ENCODE measurements at regions of chr21 and their contacts with region 1.

Region 1: DNA sequence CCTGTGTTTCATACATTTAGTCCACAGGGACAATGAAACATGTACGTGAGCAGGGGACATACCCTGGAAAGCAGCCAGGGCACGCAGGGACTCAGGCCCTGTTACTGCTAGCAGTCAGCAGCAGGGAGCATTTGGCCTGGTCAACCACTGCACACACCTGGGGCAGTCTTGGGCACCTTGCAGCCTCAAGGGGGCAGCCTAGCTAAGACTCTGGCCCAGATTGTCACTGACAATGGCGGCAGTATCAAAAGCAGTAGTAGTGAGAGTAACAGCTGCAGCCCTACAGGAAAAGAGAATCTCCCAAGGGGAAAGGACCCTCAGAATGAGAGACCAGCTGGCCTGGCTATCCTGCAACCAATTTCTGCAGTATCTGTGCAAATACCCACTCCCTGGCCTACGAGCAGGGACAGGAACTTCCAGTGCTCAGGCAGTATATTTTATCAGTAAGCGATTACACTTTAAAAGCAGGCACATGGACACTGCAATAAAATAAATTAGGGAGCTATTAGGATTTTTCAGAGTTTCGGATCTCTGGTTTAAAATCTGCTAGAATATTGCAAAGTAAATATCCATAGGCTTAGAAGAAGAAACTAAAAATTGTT is 475.6 kb downstream of the LTN1 start:
- DNase-seq: peak; percentile 77 to 83 (median 81)
- ATAC-seq: peak; percentile 98
- H3K4me3 ChIP-seq: no peak overlapping the region
- H3K27ac ChIP-seq: no peak overlapping the region
- H3K4me1 ChIP-seq: no peaks in the 10 kb centered on the region
- H3K27me3 ChIP-seq: no peaks in the 10 kb centered on the region
- CTCF ChIP-seq: peak; percentile 52 to 70 (median 66)
- POLR2A ChIP-seq: no peak

Region 2: DNA sequence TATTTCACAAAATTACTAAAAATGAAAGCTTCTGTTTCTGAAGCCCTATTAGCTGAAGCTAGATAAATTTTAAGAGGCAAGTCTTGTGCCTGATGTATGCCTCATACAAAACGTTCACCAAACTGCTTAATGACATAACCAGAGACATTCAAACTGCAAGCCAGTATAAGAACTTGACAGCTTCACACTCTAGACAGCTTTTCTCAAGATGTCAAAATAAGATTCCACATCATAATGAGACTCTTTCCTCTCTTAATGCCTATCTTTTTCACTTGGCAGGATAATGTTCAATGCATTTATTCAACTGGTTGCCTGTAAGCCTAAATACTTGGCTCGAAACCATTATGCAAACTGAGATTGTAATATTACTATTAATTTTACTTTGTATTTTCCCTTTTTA is 51.6 kb after region 1 on chr21:
- intact Hi-C with region 1: no loop called
- DNase-seq: no peak
- ATAC-seq: no peak
- H3K4me3 ChIP-seq: no peak overlapping the region
- H3K27ac ChIP-seq: no peak overlapping the region
- H3K4me1 ChIP-seq: no peaks in the 10 kb centered on the region
- H3K27me3 ChIP-seq: no peaks in the 10 kb centered on the region
- CTCF ChIP-seq: no peak
- POLR2A ChIP-seq: no peak

Region 3: DNA sequence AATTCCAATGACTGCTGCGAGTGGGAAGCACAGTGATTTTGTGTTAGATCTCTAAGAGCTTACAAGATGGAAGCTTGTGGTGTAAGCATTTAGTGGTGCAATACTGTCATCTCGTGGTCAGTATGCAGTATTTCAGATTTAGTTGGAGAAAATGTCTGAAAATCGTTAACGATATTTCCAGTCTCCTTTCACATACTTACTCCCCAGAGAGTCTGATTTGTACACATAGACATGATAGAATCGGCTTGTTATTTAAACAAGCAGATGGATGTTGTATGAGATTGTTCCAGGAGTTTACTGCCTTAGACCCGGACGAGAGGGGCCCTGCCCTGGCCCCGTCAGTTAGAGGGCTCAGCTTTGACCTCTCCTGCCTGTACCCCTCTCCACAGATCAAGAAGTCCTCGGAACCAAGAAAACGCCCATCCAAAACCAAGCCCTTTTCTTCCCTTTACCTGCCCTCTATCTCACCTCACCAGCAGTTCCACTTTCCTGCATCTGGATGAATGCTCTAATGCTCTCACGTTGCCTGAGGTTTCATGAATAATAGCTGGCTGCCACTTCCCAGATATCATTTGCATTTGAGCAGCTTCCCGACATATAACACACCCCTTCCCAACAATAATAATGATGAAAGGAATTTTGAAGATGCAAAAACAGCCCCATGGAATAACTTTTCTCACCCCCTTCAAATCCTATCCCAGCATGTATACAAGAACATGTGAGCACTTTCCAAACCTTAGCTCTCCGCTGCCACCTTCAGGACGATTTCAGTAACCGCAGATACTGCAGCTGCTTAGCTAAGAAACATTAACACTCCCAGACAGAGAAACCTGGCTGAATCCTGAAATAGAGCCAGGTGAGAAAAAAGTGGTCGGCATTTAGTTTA is 228.3 kb after region 1 on chr21:
- intact Hi-C with region 1: loop called (anchors 10 kb)
- DNase-seq: peak; percentile 77 to 80 (median 78)
- ATAC-seq: peak; percentile 95
- H3K4me3 ChIP-seq: peak overlapping the region in 1 of 2 donors; percentile 7
- H3K27ac ChIP-seq: peak overlapping the region in 2 of 4 donors; percentile 22 to 26
- H3K4me1 ChIP-seq: no peaks in the 10 kb centered on the region
- H3K27me3 ChIP-seq: no peaks in the 10 kb centered on the region
- CTCF ChIP-seq: peak; percentile 70 to 99 (median 98)
- POLR2A ChIP-seq: no peak

Measured in body of pancreas (tissue), 4 donors.